B cell (primary cell): ENCODE measurements at regions of chrX and their contacts with region 1.

Region 1: GRCh38 chrX:56729152-56729850 is at the start of gene NBDY:
- DNase-seq: peak; percentile 53
- ATAC-seq: peak; percentile 76
- H3K4me3 ChIP-seq: peak within 1 kb of the TSS; percentile 67 to 78 (median 71)
- H3K4me3 Mint-ChIP-seq: peak within 1 kb of the TSS; percentile 96
- H3K27ac ChIP-seq: peak within 1 kb of the TSS; percentile 78 to 86
- H3K27ac Mint-ChIP-seq: peak within 1 kb of the TSS; percentile 90
- H3K4me1 ChIP-seq: peaks cover 5 to 11% of the 10 kb centered on the region in 2 donors
- H3K4me1 Mint-ChIP-seq: peaks cover 28% of the 10 kb centered on the region
- H3K27me3 ChIP-seq: no peaks in the 10 kb centered on the region
- H3K27me3 Mint-ChIP-seq: no peaks in the 10 kb centered on the region
- CTCF ChIP-seq: no peak
- total RNA-seq, gene NBDY: 31.8 and 36.5 TPM in 2 replicates

Region 2: DNA sequence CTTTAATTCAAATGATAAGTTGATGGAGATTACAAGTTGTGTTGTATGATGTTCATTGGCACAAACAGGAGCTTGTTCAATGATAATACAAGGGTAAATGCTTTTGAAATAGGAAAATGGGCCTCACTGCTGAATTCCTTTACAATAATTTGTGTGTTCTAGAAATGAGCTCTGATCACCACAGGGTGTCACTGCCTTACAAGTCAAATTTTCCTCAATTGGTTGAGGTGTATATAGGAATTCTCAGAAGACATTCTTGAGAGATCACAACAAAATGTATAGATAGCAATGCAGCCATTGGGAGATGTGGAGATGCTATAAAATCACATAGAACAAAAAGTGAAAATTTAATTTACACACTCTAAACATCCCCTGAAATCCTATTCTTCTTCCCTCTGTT is 447.5 kb before region 1 on chrX:
- CTCF ChIA-PET with region 1: interaction called, 24 read pairs
- POLR2A ChIA-PET with region 1: no interaction called
- intact Hi-C with region 1: no loop called
- DNase-seq: peak; percentile 4
- ATAC-seq: no peak
- H3K4me3 ChIP-seq: no peak overlapping the region
- H3K4me3 Mint-ChIP-seq: no peak overlapping the region
- H3K27ac ChIP-seq: no peak overlapping the region
- H3K27ac Mint-ChIP-seq: no peak overlapping the region
- H3K4me1 ChIP-seq: no peaks in the 10 kb centered on the region
- H3K4me1 Mint-ChIP-seq: no peaks in the 10 kb centered on the region
- H3K27me3 ChIP-seq: no peaks in the 10 kb centered on the region
- H3K27me3 Mint-ChIP-seq: no peaks in the 10 kb centered on the region
- CTCF ChIP-seq: no peak

Region 3: DNA sequence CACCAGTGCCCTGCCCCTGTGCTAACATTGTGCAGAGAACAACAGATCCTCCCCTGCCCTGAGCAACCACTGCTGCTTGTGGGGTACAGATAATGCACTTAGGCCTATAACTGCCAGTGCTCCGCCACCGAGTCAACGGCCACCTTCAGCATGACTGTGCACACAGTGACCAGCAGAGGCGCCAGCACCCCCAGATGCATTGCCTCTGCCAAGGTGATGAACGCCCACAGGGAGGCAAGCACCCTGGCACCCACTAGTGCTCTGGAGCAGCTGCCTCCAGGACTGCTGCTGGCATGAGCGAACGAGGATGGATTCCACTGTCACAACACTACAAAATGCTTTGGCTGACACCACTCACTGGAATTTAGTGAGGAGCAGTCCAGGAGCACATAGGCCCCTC is 353.8 kb after region 1 on chrX:
- CTCF ChIA-PET with region 1: no interaction called
- POLR2A ChIA-PET with region 1: no interaction called
- intact Hi-C with region 1: no loop called
- DNase-seq: no peak
- ATAC-seq: no peak
- H3K4me3 ChIP-seq: no peak overlapping the region
- H3K4me3 Mint-ChIP-seq: no peak overlapping the region
- H3K27ac ChIP-seq: no peak overlapping the region
- H3K27ac Mint-ChIP-seq: no peak overlapping the region
- H3K4me1 ChIP-seq: no peaks in the 10 kb centered on the region
- H3K4me1 Mint-ChIP-seq: no peaks in the 10 kb centered on the region
- H3K27me3 ChIP-seq: no peaks in the 10 kb centered on the region
- H3K27me3 Mint-ChIP-seq: no peaks in the 10 kb centered on the region
- CTCF ChIP-seq: no peak